ENCODE measurements at regions of chr2 and their contacts with region 1.

Region 1: DNA sequence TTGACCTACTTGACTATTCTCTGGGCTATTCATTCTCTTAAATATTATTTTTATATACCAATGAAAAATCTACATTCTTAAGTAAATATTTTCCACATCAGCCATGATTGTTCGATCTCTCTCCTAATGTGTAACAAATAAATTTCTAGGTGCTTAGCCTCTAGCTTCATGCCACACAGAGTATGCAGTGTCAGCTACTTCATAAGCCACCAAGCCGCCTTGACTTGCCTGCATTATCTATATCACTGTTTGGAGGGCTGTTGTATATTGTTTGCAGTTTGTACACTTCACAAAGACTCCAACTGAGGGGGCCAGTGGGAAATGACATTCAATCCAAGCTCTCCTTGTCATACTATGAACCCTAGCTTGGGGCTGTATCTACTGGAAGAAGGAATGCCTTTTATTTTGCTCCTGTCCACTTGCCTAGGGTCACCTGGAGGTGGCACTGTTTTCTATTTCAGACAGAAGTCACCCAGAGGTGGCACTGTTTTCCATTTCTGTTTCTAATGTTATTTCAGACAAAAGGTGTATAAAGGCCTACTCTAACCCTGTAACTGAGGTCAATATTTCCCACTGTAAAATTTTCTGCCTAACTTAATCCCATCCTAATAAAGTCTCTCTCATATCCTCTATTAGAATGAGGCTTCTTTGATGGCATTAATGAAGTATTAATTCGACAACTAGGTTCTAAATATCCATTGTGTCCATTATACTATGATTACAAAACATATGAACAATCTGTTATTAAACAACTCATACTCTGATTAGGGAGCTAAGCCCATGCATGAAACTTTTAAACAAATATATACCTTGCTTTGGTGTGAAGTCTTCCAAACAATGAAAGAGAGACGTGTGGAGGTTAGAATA is 36.4 kb downstream of the COL5A2 start:
- DNase-seq: peak in 8 of 9 donors; percentile 35 to 68 (median 56)
- ATAC-seq: peak; percentile 88
- H3K4me3 ChIP-seq: no peak overlapping the region
- H3K4me3 Mint-ChIP-seq: no peak overlapping the region
- H3K27ac ChIP-seq: no peak overlapping the region
- H3K27ac Mint-ChIP-seq: peak overlapping the region in 1 of 9 donors; percentile 10
- H3K4me1 ChIP-seq: no peaks in the 10 kb centered on the region
- H3K4me1 Mint-ChIP-seq: peaks cover 0 to 6% (median 0%) of the 10 kb centered on the region in 7 donors
- H3K27me3 ChIP-seq: no peaks in the 10 kb centered on the region
- H3K27me3 Mint-ChIP-seq: no peaks in the 10 kb centered on the region

Region 2: GRCh38 chr2:189096769-189097447 is 46.2 kb before region 1 on chr2:
- CTCF ChIA-PET with region 1: interaction called, 3 read pairs
- POLR2A ChIA-PET with region 1: no interaction called
- intact Hi-C with region 1: loop called in 1 of 2 experiments (anchors 1 kb)
- DNase-seq: no peak
- ATAC-seq: no peak
- H3K4me3 ChIP-seq: no peak overlapping the region
- H3K4me3 Mint-ChIP-seq: no peak overlapping the region
- H3K27ac ChIP-seq: no peak overlapping the region
- H3K27ac Mint-ChIP-seq: no peak overlapping the region
- H3K4me1 ChIP-seq: no peaks in the 10 kb centered on the region
- H3K4me1 Mint-ChIP-seq: peaks cover 0 to 5% (median 0%) of the 10 kb centered on the region in 7 donors
- H3K27me3 ChIP-seq: no peaks in the 10 kb centered on the region
- H3K27me3 Mint-ChIP-seq: no peaks in the 10 kb centered on the region

Region 3: DNA sequence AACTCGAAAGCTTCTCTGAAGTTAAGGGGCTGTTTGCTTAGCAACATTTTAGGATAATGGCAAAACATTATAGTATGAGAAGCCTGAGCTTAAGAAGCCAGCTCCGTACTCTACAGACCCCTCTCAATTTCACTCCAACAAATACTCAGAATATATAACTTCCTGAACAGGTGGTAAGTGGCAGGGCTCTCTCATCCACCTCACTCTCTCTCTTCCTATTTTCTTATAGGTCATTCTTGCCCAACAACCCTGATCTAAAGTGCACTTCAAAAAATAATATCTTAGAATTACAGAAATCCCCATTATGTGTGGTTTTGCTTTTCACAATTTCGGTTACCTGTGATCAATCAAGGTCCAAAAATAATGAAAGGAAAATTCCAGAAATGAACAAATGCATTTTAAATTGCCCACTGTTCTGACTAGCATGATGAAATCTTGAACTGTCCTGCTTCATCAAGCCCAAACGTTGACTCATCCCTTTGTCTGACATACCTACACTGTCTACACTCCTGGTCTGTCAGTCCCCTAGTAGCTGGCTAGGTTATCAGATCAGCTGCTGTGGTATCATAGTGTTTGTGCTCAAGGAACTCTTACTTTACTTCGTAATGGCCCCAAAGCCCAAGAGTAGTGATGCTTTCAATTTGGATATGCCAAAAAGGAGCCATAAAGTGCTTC is 159.3 kb after region 1 on chr2:
- CTCF ChIA-PET with region 1: no interaction called
- POLR2A ChIA-PET with region 1: no interaction called
- intact Hi-C with region 1: loop called in 1 of 2 experiments (anchors 5 kb)
- DNase-seq: no peak
- ATAC-seq: no peak
- H3K4me3 ChIP-seq: no peak overlapping the region
- H3K4me3 Mint-ChIP-seq: peak overlapping the region in 8 of 10 donors; percentile 4 to 74 (median 60)
- H3K27ac ChIP-seq: no peak overlapping the region
- H3K27ac Mint-ChIP-seq: peak overlapping the region in 8 of 9 donors; percentile 25 to 95 (median 70)
- H3K4me1 ChIP-seq: peaks cover 56 to 88% of the 10 kb centered on the region in 2 donors
- H3K4me1 Mint-ChIP-seq: peaks cover 57 to 96% (median 91%) of the 10 kb centered on the region in 7 donors
- H3K27me3 ChIP-seq: no peaks in the 10 kb centered on the region
- H3K27me3 Mint-ChIP-seq: no peaks in the 10 kb centered on the region